G401 (cell line): ENCODE measurements at regions of chr2 and their contacts with region 1.

Region 1: GRCh38 chr2:218870984-218871344 is 9.7 kb upstream of the WNT10A start:
- DNase-seq: no peak

Region 2: GRCh38 chr2:218908721-218909619 is 38.0 kb after region 1 on chr2:
- in situ Hi-C with region 1: loop called (anchors 5 kb)
- DNase-seq: peak; percentile 88